Body of pancreas (tissue), 4 donors: ENCODE measurements at regions of chr19 and their contacts with region 1.

Region 1: DNA sequence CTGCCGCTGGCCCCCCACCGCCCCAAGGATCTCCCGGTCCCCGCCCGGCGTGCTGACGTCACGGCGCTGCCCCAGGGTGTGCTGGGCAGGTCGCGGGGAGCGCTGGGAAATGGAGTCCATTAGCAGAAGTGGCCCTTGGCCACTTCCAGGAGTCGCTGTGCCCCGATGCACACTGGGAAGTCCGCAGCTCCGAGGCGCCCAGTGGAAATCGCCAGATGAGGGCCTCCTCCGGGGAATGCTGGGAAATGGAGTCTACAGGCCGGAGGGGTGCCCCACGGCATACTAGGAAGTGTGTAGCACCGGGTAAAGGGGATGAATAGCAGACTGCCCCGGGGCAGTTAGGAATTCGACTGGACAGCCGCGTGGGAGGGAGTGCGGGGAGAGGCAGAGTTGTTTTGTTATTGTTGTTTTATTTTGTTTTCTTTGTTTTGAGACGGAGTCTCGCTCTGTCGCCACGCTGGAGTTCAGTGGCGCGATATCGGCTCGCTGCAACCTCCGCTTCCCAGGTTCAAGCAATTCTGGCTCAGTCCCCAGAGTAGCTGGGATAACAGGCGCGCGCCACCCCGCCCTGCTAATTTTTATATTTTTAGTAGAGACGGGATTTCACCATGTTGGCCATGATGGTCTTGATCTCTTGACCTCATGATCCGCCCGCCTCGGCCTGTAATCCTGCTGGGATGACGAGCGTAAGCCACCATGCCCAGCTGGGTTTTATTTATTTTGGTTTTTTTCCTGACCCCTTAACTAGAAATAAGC is at the start of gene PPP1R12C:
- DNase-seq: peak; percentile 98 to 99 (median 99)
- ATAC-seq: peak; percentile 97
- H3K4me3 ChIP-seq: peak within 1 kb of the TSS; percentile 71 to 73
- H3K27ac ChIP-seq: peak within 1 kb of the TSS; percentile 62 to 78 (median 70)
- H3K4me1 ChIP-seq: peaks cover 47% of the 10 kb centered on the region
- H3K27me3 ChIP-seq: no peaks in the 10 kb centered on the region
- CTCF ChIP-seq: peak in 2 of 7 experiments; percentile 9 to 33
- POLR2A ChIP-seq: peak in 2 of 3 donors; percentile 58 to 62
- total RNA-seq, gene PPP1R12C: 81.2 to 135 TPM

Region 2: GRCh38 chr19:55619286-55619685 is 501.5 kb after region 1 on chr19:
- intact Hi-C with region 1: loop called (anchors 10 kb)
- DNase-seq: no peak
- ATAC-seq: no peak
- H3K4me3 ChIP-seq: no peak overlapping the region
- H3K27ac ChIP-seq: no peak overlapping the region
- H3K4me1 ChIP-seq: peaks cover 6% of the 10 kb centered on the region
- H3K27me3 ChIP-seq: no peaks in the 10 kb centered on the region
- CTCF ChIP-seq: no peak
- POLR2A ChIP-seq: no peak